ENCODE measurements at regions of chr12 and their contacts with region 1.

Region 1: DNA sequence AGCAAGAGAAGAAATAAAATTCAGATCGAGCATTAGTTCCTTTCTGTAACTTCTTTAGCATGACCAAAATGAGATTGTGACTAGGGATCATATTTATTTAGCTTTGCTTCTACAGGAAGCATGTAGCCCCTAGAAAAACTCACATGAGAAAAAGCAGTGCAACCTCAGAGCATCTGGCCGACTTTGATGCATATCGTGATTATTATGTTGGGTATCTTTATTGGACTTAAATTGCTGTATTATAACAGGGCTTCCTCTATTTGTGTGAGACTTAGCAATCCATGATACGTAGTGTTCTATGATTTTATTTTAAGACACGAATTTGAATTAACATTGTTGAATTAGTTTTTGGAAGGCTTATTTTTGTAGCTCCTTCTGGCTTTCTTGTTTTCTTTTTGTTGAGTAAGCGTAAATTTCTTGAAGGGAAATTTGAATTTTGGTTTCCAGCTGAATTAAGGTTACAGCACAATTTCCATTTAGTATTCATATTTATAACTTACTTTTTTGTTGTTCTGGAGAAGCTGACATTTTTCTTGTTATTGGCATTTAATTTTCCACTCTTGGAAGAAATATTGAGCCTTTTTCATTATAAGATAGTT is 33.9 kb downstream of the WASHC4 start:
- H3K4me3 Mint-ChIP-seq: no peak overlapping the region
- H3K27ac Mint-ChIP-seq: no peak overlapping the region
- H3K4me1 Mint-ChIP-seq: no peaks in the 10 kb centered on the region
- H3K27me3 Mint-ChIP-seq: no peaks in the 10 kb centered on the region

Region 2: GRCh38 chr12:104090687-104091086 is 1050.7 kb before region 1 on chr12:
- intact Hi-C with region 1: loop called (anchors 10 kb)
- H3K4me3 Mint-ChIP-seq: no peak overlapping the region
- H3K27ac Mint-ChIP-seq: no peak overlapping the region
- H3K4me1 Mint-ChIP-seq: no peaks in the 10 kb centered on the region
- H3K27me3 Mint-ChIP-seq: no peaks in the 10 kb centered on the region

Region 3: GRCh38 chr12:104632724-104633201 is 508.7 kb before region 1 on chr12:
- intact Hi-C with region 1: no loop called
- H3K4me3 Mint-ChIP-seq: no peak overlapping the region
- H3K27ac Mint-ChIP-seq: peak overlapping the region; percentile 25
- H3K4me1 Mint-ChIP-seq: peaks cover 87% of the 10 kb centered on the region
- H3K27me3 Mint-ChIP-seq: no peaks in the 10 kb centered on the region

Region 4: DNA sequence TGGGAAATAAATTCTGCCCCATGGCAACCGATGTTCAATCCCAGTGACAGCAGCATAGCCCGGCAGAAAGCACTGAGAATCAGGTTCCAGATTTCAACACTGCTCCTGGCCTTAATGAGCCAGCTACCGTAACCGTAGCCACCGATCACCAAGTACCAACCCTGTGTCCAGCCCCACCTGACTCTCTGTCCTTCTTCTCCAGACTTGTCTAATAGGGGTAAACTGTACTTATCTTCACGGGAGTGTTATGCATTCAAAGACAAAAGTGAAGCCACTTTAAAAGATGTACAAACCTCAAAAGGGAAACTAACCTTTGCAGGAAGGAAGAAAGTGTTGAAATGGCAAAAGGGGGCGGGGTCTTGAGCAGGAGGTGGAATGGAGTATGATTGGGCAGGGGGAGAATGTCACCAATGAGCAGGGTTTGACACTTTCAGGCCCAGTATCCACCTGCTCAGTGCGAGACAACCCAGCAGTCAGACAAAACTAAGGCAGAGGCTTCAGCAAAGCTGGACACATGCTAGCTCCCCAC is 458.6 kb before region 1 on chr12:
- intact Hi-C with region 1: no loop called
- H3K4me3 Mint-ChIP-seq: no peak overlapping the region
- H3K27ac Mint-ChIP-seq: no peak overlapping the region
- H3K4me1 Mint-ChIP-seq: peaks cover 88% of the 10 kb centered on the region
- H3K27me3 Mint-ChIP-seq: no peaks in the 10 kb centered on the region

Region 5: GRCh38 chr12:105041186-105041585 is 100.2 kb before region 1 on chr12:
- intact Hi-C with region 1: no loop called
- H3K4me3 Mint-ChIP-seq: no peak overlapping the region
- H3K27ac Mint-ChIP-seq: no peak overlapping the region
- H3K4me1 Mint-ChIP-seq: peaks cover 6% of the 10 kb centered on the region
- H3K27me3 Mint-ChIP-seq: no peaks in the 10 kb centered on the region

Region 6: DNA sequence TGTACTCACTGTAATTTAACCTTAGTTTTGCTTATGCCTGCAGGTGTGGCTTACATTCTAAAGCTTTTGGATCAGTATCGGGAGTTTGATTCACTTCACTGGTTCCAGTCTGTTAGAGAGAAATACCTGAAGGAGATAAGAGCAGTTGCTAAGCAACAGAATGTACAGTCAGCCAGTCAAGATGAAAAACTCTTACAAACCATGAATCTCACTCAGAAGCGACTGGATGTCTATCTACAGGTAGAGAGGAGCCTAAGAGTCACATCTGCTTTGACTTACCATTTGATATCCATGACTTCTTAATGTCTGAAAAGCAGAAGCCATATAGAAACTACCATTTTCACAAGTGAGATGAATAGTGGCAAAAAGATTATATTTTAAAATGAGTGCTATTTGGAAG is 22.6 kb after region 1 on chr12:
- intact Hi-C with region 1: loop called (anchors 2 kb)
- H3K4me3 Mint-ChIP-seq: no peak overlapping the region
- H3K27ac Mint-ChIP-seq: no peak overlapping the region
- H3K4me1 Mint-ChIP-seq: no peaks in the 10 kb centered on the region
- H3K27me3 Mint-ChIP-seq: no peaks in the 10 kb centered on the region